Heart left ventricle (tissue), 16 donors: ENCODE measurements at regions of chr2 and their contacts with region 1.

Region 1: GRCh38 chr2:109637749-109638570 is 23.8 kb downstream of the SOWAHC start:
- DNase-seq: no peak
- ATAC-seq: peak in 2 of 4 donors; percentile 44 to 54
- H3K4me3 ChIP-seq: no peak overlapping the region
- H3K27ac ChIP-seq: peak overlapping the region in 1 of 12 donors; percentile 71
- H3K4me1 ChIP-seq: peaks cover 0 to 34% (median 0%) of the 10 kb centered on the region in 12 donors
- H3K27me3 ChIP-seq: no peaks in the 10 kb centered on the region
- CTCF ChIP-seq: no peak
- POLR2A ChIP-seq: no peak

Region 2: GRCh38 chr2:109575373-109575772 is 62.6 kb before region 1 on chr2:
- intact Hi-C with region 1: loop called in 1 of 10 experiments (anchors 2 kb)
- DNase-seq: no peak
- ATAC-seq: no peak
- H3K4me3 ChIP-seq: no peak overlapping the region
- H3K27ac ChIP-seq: no peak overlapping the region
- H3K4me1 ChIP-seq: no peaks in the 10 kb centered on the region
- H3K27me3 ChIP-seq: no peaks in the 10 kb centered on the region
- CTCF ChIP-seq: no peak
- POLR2A ChIP-seq: no peak

Region 3: GRCh38 chr2:109736177-109736827 is 98.3 kb after region 1 on chr2:
- intact Hi-C with region 1: no loop called
- DNase-seq: peak in 4 of 5 donors; percentile 39 to 54 (median 46)
- ATAC-seq: peak in 3 of 4 donors; percentile 50 to 75 (median 61)
- H3K4me3 ChIP-seq: no peak overlapping the region
- H3K27ac ChIP-seq: no peak overlapping the region
- H3K4me1 ChIP-seq: no peaks in the 10 kb centered on the region
- H3K27me3 ChIP-seq: no peaks in the 10 kb centered on the region
- CTCF ChIP-seq: peak; percentile 39 to 86 (median 74)
- POLR2A ChIP-seq: no peak